ENCODE measurements at regions of chr17 and their contacts with region 1.

Region 1: GRCh38 chr17:75632863-75633485 is at the start of gene SMIM5:
- DNase-seq: peak; percentile 94
- ATAC-seq: peak; percentile 71
- H3K4me3 Mint-ChIP-seq: peak within 1 kb of the TSS; percentile 24; the same call in 1 of the 2 replicates
- H3K27ac Mint-ChIP-seq: peak within 1 kb of the TSS; percentile 63; the same call in 1 of the 2 replicates
- H3K4me1 Mint-ChIP-seq: peaks cover 11% of the 10 kb centered on the region
- H3K27me3 Mint-ChIP-seq: no peaks in the 10 kb centered on the region
- CTCF ChIP-seq: peak; percentile 94
- total RNA-seq, gene SMIM5: 0.05 TPM in 1 of 3 replicates, not detected in the others

Region 2: GRCh38 chr17:75182569-75183450 is 450.2 kb before region 1 on chr17 and contains the start of gene SUMO2:
- CTCF ChIA-PET with region 1: no interaction called
- POLR2A ChIA-PET with region 1: no interaction called
- DNase-seq: peak; percentile 95
- ATAC-seq: peak; percentile 79
- H3K4me3 Mint-ChIP-seq: peak within 1 kb of the TSS; percentile 92
- H3K27ac Mint-ChIP-seq: peak within 1 kb of the TSS; percentile 96
- H3K4me1 Mint-ChIP-seq: peaks cover 26% of the 10 kb centered on the region
- H3K27me3 Mint-ChIP-seq: no peaks in the 10 kb centered on the region
- CTCF ChIP-seq: no peak
- total RNA-seq, gene SUMO2: 650 to 764 TPM (median 757 TPM) in 3 replicates

Region 3: DNA sequence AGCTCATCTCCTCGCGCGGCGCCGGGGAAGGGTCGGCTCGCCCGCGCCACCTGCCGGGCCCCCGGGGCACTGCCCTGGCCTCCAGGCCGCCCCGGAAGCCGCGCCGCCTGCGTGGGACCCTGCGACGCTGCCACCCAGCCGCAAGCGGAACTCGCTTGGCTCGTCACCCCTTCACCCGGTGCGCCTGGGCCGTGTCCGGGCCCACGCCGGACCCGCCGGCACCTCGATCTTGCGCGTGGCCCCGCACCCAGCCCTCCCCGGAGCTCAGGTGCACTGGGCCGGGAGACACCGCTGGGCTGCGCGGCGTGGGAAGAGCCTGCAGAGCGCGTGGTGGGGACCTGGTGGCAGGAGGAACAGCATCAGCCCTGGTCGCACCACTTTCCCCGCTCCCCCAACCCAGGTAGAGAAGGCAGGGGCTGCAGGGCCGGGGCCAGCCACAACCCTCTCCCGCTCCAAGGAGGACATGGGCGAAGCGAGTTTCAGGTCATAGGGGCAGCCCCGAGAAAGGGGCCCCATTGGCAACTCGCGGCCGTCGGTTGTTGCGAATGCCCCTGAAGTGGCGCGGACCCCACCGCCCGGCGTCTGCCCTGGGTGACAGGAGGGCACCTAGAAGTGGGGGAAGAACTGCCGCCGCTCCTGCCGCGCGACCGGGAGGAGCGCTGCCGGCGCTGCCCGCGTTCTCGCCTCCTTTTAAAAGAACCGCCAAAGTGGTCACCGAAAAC is 361.6 kb before region 1 on chr17:
- CTCF ChIA-PET with region 1: interaction called, 11 read pairs
- POLR2A ChIA-PET with region 1: no interaction called
- DNase-seq: peak; percentile 78
- ATAC-seq: peak; percentile 31
- H3K4me3 Mint-ChIP-seq: peak overlapping the region; percentile 79
- H3K27ac Mint-ChIP-seq: no peak overlapping the region
- H3K4me1 Mint-ChIP-seq: peaks cover 19% of the 10 kb centered on the region
- H3K27me3 Mint-ChIP-seq: no peaks in the 10 kb centered on the region
- CTCF ChIP-seq: peak; percentile 83

Region 4: DNA sequence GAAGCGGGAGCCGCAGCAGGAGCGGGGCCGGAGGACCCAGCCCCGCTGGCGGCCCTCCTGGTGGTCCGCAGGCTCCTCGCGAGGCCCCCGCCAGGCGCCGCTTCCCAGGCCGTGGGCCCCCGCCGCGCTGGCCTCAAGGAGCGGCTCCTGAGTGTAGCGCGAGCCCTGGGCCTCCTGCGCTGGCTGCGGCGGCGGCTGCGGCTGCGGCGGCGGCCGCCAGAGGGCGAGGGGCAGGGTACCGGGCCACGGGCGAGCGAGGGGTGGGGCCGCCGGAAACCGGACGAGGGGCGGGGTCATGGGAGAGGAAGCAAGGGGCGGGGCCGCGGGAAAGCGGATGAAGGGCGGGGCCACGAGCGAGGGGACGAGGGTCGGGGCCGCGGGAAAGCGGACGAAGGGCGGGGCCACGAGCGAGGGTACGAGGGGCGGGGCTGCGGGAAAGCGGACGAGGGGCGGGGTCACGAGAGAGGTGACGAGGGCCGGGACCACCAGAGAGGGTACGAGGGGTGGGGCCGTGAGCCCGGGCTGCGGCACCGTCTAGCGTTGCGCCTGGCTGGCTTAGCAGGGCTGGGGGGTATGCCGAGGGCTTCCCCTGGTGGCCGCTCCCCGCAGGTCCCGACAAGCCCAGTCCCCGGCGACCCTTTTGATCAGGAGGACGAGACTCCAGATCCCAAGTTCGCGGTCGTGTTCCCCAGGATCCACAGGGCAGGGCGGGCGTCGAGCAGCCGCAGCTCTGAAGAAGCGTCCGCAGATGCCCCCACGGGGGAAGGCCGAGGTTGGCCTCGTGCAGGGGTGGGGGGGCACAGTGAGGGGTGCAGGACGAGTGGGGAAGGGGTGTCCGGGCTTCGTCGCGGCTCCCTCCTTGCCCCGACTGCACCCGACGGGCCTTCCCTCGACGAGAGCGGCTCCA is 43.7 kb before region 1 on chr17:
- CTCF ChIA-PET with region 1: interaction called, 52 read pairs
- POLR2A ChIA-PET with region 1: no interaction called
- DNase-seq: peak; percentile 95
- ATAC-seq: peak; percentile 89
- H3K4me3 Mint-ChIP-seq: peak overlapping the region; percentile 49
- H3K27ac Mint-ChIP-seq: no peak overlapping the region
- H3K4me1 Mint-ChIP-seq: peaks cover 5% of the 10 kb centered on the region
- H3K27me3 Mint-ChIP-seq: peaks cover 25% of the 10 kb centered on the region
- CTCF ChIP-seq: peak; percentile 49; the same call in 1 of the 2 replicates

Region 5: GRCh38 chr17:75667021-75667790 is 34.2 kb after region 1 on chr17 and contains the starts of genes RECQL5 and SAP30BP:
- CTCF ChIA-PET with region 1: interaction called, 456 read pairs
- POLR2A ChIA-PET with region 1: interaction called, 4 read pairs
- DNase-seq: peak; percentile 96
- ATAC-seq: peak; percentile 100
- H3K4me3 Mint-ChIP-seq: no peak within 1 kb of the TSS
- H3K27ac Mint-ChIP-seq: peak within 1 kb of the TSS; percentile 65; the same call in 1 of the 2 replicates
- H3K4me1 Mint-ChIP-seq: peaks cover 12% of the 10 kb centered on the region
- H3K27me3 Mint-ChIP-seq: no peaks in the 10 kb centered on the region
- CTCF ChIP-seq: no peak
- total RNA-seq, gene RECQL5: 48.9 to 53.1 TPM (median 51.0 TPM) in 3 replicates
- total RNA-seq, gene SAP30BP: 67.5 to 86.8 TPM (median 72.0 TPM) in 3 replicates

Region 6: GRCh38 chr17:75712446-75712845 is 79.5 kb after region 1 on chr17:
- CTCF ChIA-PET with region 1: interaction called, 10 read pairs
- POLR2A ChIA-PET with region 1: no interaction called
- DNase-seq: no peak
- ATAC-seq: no peak
- H3K4me3 Mint-ChIP-seq: no peak overlapping the region
- H3K27ac Mint-ChIP-seq: no peak overlapping the region
- H3K4me1 Mint-ChIP-seq: no peaks in the 10 kb centered on the region
- H3K27me3 Mint-ChIP-seq: no peaks in the 10 kb centered on the region
- CTCF ChIP-seq: no peak

Region 7: DNA sequence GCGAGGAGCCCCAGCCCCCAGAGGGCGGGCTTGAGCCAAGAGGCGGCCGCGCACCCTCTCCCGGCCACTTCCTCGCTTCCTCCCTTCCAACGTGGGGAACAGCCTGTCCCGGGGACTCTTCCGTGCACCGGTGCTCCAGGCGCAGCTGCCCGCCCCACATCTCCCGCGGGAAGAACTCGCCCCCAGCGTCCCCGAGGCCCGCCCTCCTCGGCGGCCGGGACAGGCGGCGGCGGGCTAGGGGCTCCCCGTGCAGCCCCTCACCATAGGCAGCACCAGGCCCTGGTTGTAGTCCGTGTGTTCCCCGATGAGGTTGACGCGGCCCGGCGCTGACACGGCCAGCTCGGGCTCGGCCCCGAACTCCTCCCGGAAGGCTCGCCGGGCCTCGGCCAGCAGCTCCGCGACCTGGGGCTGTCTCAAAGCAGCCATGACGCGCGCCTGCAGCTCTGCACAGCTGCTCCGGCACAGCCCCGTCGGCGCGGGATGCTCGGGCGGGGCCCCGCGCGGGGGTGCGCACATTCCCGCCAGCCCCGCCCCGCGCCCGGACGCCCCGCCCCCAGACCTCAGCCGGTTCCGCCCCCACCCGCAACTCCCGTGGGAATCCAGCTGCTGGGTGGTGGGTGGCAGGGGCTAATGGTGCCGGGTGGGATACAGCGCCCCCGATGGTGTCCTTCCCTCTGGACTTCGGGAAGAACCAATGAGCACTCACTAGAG is 131.9 kb after region 1 on chr17 and contains the start of gene GALK1:
- CTCF ChIA-PET with region 1: interaction called, 38 read pairs
- POLR2A ChIA-PET with region 1: no interaction called
- DNase-seq: peak; percentile 67
- ATAC-seq: peak; percentile 76
- H3K4me3 Mint-ChIP-seq: peak within 1 kb of the TSS; percentile 75
- H3K27ac Mint-ChIP-seq: peak within 1 kb of the TSS; percentile 92
- H3K4me1 Mint-ChIP-seq: peaks cover 9% of the 10 kb centered on the region
- H3K27me3 Mint-ChIP-seq: no peaks in the 10 kb centered on the region
- CTCF ChIP-seq: no peak
- total RNA-seq, gene GALK1: 42.2 to 49.9 TPM (median 49.4 TPM) in 3 replicates

Measured in WTC11 (cell line).